ENCODE measurements at regions of chr2 and their contacts with region 1.

Region 1: DNA sequence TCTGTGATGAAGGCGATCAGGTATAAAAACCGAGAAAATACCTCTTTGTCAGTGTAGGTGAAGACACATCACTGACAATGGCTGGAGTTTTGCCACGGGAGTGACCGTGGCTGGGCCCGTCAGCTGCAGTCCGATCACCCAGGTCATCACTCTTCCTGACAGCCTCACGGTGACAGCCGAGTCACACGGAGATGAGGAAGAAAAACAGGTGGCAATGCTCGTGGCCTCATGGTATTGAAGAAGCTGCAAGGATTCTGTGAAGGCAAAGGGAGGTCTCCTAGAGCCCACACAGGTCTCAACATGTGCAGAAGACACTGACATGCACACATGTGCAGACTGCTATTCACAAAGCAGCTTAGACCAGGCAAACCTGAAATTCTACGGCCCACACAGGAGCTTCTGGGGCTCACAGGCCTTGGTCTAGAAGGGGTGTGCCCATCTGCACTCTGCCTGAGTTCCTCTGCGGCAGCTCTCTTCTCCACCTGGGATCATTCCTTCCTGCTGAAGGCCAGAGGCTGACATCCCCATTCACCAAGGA is 7.4 kb downstream of the COPS9 start:
- DNase-seq: peak in 3 of 5 donors; percentile 2 to 6 (median 2)
- H3K4me3 ChIP-seq: no peak overlapping the region
- H3K27ac ChIP-seq: no peak overlapping the region
- H3K4me1 ChIP-seq: no peaks in the 10 kb centered on the region
- H3K27me3 ChIP-seq: no peaks in the 10 kb centered on the region
- CTCF ChIP-seq: no peak
- EP300 ChIP-seq: no peak
- POLR2A ChIP-seq: no peak

Region 2: DNA sequence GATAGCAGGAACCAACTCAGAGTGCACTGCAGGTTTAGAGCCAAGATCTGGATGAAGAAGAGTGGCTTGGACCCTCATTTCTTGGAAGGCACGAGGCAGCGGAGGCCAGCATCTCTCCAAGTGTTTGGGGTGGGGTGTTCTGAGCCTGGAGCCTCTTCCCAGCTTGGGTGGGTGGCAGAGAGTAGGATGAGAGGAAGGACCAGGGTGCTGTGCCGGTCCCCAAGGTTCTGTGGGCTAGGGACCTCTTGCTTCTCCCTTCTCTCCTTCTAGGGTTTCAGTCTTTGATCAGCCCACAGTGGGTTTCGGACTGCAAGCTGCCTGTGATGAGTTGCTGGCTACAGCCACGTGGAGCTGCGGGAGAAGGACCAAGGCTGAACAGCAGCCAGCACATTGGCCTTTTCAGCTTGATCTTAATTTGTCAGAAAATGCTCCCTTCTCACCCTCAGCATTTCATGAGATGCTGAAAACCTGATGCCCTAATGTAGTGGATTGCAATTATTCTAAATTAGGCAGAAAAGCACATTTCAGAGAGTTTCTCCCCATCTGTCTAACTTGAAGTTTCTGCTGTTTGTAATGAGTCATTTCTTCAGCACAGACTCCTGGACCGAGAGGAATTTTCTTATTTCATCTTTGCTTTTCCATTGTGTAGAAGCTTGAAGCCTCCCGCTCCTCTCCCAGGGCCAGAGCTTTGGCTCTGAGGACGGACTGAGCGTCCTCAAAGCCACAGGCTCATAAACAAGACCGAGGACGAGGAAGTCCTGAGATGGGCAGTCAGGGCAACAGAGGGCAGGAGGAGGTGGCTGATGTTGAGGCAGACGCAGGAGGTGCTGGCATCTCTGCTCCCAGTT is 628.7 kb before region 1 on chr2:
- intact Hi-C with region 1: loop called in 1 of 4 experiments (anchors 10 kb)
- DNase-seq: no peak
- H3K4me3 ChIP-seq: no peak overlapping the region
- H3K27ac ChIP-seq: no peak overlapping the region
- H3K4me1 ChIP-seq: peaks cover 6% of the 10 kb centered on the region
- H3K27me3 ChIP-seq: no peaks in the 10 kb centered on the region
- CTCF ChIP-seq: no peak
- EP300 ChIP-seq: no peak
- POLR2A ChIP-seq: no peak

Measured in ovary (tissue), 10 donors.